WTC11 (cell line): ENCODE measurements at regions of chr21 and their contacts with region 1.

Region 1: GRCh38 chr21:43816611-43817478 is 27.5 kb downstream of the RRP1 start:
- DNase-seq: peak; percentile 41
- ATAC-seq: peak; percentile 43
- H3K4me3 Mint-ChIP-seq: no peak overlapping the region
- H3K27ac Mint-ChIP-seq: no peak overlapping the region
- H3K4me1 Mint-ChIP-seq: peaks cover 14% of the 10 kb centered on the region
- H3K27me3 Mint-ChIP-seq: no peaks in the 10 kb centered on the region
- CTCF ChIP-seq: no peak

Region 2: DNA sequence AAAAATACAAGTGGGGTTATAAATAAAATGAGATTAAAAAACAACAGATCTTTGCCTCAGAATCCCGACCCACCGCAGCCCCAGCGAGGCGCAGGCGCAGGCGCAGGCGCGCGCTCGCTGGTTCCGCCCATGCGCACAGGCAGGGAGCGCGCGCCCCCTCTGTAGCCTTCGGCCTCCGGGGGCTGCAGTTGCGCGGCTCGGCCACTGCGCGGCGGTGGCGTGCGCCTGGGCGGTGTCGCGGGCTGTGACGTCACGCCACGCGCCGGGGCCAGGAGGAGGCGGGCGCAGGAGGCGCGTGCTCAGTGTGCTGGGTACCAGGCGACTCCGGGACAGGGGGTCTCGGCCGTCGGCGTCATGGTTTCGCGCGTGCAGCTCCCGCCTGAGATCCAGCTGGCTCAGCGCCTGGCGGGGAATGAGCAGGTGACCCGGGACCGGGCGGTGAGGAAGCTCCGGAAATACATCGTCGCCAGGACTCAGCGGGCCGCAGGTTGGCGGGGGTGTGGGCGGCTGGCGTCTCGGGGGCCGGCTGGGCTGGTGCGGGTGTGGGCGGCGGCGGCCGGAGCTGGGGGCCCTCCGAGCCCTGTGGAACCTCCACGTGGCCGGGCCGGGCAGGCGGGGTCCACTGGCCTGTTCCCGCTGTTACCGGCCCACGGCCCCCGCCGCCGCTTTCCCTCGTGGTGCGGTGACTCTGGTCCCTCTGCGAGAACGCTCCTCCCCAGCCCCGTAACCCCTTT is 27.4 kb before region 1 on chr21 and contains the start of gene RRP1:
- CTCF ChIA-PET with region 1: interaction called, 10 read pairs
- POLR2A ChIA-PET with region 1: interaction called, 3 read pairs
- DNase-seq: peak; percentile 90
- ATAC-seq: peak; percentile 94
- H3K4me3 Mint-ChIP-seq: peak within 1 kb of the TSS; percentile 97
- H3K27ac Mint-ChIP-seq: peak within 1 kb of the TSS; percentile 95
- H3K4me1 Mint-ChIP-seq: peaks cover 11% of the 10 kb centered on the region
- H3K27me3 Mint-ChIP-seq: no peaks in the 10 kb centered on the region
- CTCF ChIP-seq: peak; percentile 99
- total RNA-seq, gene RRP1: 45.0 to 53.0 TPM (median 45.9 TPM) in 3 replicates

Region 3: DNA sequence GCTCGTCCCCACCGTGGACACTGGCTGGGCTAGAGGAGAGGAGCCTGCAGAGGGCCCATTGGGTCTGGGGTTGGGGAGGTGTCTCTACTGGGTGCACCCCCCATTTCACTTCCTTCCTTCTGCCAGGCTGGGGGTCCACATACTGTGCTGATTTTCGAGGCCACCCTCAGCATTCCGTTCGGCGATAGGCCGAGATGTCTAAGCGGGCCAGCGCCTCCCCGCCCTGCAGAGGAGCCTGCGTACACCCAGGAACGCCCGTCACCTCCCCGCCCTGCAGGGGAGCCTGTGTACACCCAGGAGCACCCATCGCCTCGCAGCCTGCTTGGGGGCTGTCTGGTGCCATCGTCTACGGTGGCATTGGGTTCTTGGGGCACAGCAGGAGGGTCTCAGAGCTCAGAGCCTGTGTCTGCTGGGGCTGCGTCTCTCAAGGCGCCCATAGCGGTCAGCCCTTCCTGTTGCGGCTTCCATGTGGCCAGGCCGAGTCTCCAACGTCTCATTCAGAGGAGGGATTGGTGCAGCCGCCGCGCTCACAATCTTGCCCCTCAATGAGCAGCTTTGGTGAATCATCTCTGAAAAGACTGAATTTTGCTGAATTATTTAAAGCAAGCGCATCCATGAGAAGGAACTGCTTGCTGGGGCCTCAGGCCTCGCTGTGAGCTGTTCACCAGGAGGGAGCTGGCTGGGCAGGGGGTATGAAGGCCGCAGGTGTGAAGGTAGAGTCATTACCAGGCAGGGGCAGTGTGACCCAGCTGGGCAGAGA is 17.5 kb after region 1 on chr21:
- CTCF ChIA-PET with region 1: interaction called, 10 read pairs
- POLR2A ChIA-PET with region 1: interaction called, 4 read pairs
- DNase-seq: no peak
- ATAC-seq: no peak
- H3K4me3 Mint-ChIP-seq: no peak overlapping the region
- H3K27ac Mint-ChIP-seq: no peak overlapping the region
- H3K4me1 Mint-ChIP-seq: no peaks in the 10 kb centered on the region
- H3K27me3 Mint-ChIP-seq: no peaks in the 10 kb centered on the region; the same call in 1 of the 2 replicates
- CTCF ChIP-seq: no peak

Region 4: GRCh38 chr21:43975495-43975993 is 158.7 kb after region 1 on chr21:
- CTCF ChIA-PET with region 1: interaction called, 15 read pairs
- POLR2A ChIA-PET with region 1: no interaction called
- DNase-seq: peak; percentile 87
- ATAC-seq: peak; percentile 86
- H3K4me3 Mint-ChIP-seq: peak overlapping the region; percentile 59
- H3K27ac Mint-ChIP-seq: 0 out of 2 replicates have a peak overlapping the region, but pooled peaks have one; percentile 76
- H3K4me1 Mint-ChIP-seq: no peaks in the 10 kb centered on the region
- H3K27me3 Mint-ChIP-seq: no peaks in the 10 kb centered on the region
- CTCF ChIP-seq: peak; percentile 83